Heart right ventricle (tissue), 16 donors: ENCODE measurements at regions of chr10 and their contacts with region 1.

Region 1: GRCh38 chr10:119859420-119860258 is 13.0 kb downstream of the MCMBP start:
- DNase-seq: no peak
- ATAC-seq: no peak
- H3K4me3 ChIP-seq: no peak overlapping the region
- H3K27ac ChIP-seq: no peak overlapping the region
- H3K4me1 ChIP-seq: peaks cover 0 to 14% (median 11%) of the 10 kb centered on the region in 9 donors
- H3K27me3 ChIP-seq: no peaks in the 10 kb centered on the region
- CTCF ChIP-seq: peak; percentile 38 to 75 (median 68)

Region 2: GRCh38 chr10:119588071-119588470 is 271.6 kb before region 1 on chr10:
- intact Hi-C with region 1: no loop called
- DNase-seq: no peak
- ATAC-seq: no peak
- H3K4me3 ChIP-seq: no peak overlapping the region
- H3K27ac ChIP-seq: no peak overlapping the region
- H3K4me1 ChIP-seq: peaks cover 0 to 37% (median 27%) of the 10 kb centered on the region in 9 donors
- H3K27me3 ChIP-seq: no peaks in the 10 kb centered on the region
- CTCF ChIP-seq: no peak

Region 3: GRCh38 chr10:119616882-119617570 is 242.6 kb before region 1 on chr10:
- intact Hi-C with region 1: loop called in 2 of 10 experiments (anchors 10 kb)
- DNase-seq: peak; percentile 21 to 39
- ATAC-seq: peak in 1 of 8 donors; percentile 61
- H3K4me3 ChIP-seq: no peak overlapping the region
- H3K27ac ChIP-seq: no peak overlapping the region
- H3K4me1 ChIP-seq: peaks cover 0 to 37% (median 18%) of the 10 kb centered on the region in 9 donors
- H3K27me3 ChIP-seq: no peaks in the 10 kb centered on the region
- CTCF ChIP-seq: peak in 3 of 9 donors; percentile 25 to 44 (median 26)

Region 4: GRCh38 chr10:119686439-119687191 is 173.0 kb before region 1 on chr10:
- intact Hi-C with region 1: loop called in 9 of 10 experiments (anchors 5 to 10 kb)
- DNase-seq: peak; percentile 78 to 85
- ATAC-seq: peak; percentile 83 to 93 (median 89)
- H3K4me3 ChIP-seq: peak overlapping the region in 7 of 10 donors; percentile 10 to 51 (median 42)
- H3K27ac ChIP-seq: peak overlapping the region in 8 of 10 donors; percentile 3 to 72 (median 49)
- H3K4me1 ChIP-seq: peaks cover 0 to 26% (median 9%) of the 10 kb centered on the region in 9 donors
- H3K27me3 ChIP-seq: no peaks in the 10 kb centered on the region
- CTCF ChIP-seq: peak; percentile 91 to 97 (median 95)

Region 5: DNA sequence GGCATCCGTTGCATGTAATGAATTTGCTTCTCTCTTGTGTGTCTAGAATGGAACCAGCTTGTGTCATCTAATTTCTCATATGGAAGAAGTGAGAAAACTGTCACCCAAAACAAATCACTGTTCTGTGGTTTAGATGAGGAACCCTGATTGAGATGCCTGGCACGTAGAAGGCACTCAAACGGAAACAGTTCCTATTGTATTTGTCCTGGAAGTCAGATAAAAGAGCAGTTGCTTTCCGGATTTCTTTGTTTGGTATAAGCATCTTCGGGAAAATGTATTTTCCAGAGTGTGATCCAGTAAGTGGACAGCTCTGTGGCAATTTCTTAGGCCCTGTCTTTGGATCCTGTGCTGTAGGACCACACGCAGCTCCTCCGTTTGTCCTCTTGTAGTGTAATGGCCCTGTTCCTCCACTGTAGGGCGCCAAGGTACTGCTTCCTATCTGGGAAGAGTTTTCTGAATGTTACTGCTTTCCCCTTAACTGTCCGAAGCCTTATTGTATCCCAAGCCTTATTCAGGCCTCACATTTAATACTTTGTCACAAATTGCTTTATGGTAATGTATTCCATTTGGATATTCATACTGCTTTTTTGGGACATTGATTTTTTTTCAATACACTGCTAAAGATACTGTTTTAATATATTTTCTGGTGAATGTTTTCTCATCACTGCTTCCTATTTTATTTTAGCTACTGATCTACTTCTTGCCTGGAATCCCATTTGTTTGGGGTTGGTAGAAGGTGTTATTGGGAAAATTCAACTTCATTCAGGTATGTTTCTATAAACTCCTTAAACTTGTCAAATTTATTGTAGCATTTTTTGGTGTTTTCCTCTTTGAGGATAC is 109.0 kb before region 1 on chr10:
- intact Hi-C with region 1: loop called in 9 of 10 experiments (anchors 1 to 10 kb)
- DNase-seq: peak; percentile 29 to 79
- ATAC-seq: peak; percentile 87 to 97 (median 94)
- H3K4me3 ChIP-seq: no peak overlapping the region
- H3K27ac ChIP-seq: peak overlapping the region in 1 of 10 donors; percentile 28
- H3K4me1 ChIP-seq: peaks cover 0 to 16% (median 7%) of the 10 kb centered on the region in 9 donors
- H3K27me3 ChIP-seq: no peaks in the 10 kb centered on the region
- CTCF ChIP-seq: peak; percentile 67 to 96 (median 93)

Region 6: GRCh38 chr10:119919826-119920225 is 60.2 kb after region 1 on chr10:
- intact Hi-C with region 1: loop called in 1 of 10 experiments (anchors 10 kb)
- DNase-seq: no peak
- ATAC-seq: no peak
- H3K4me3 ChIP-seq: no peak overlapping the region
- H3K27ac ChIP-seq: peak overlapping the region in 1 of 10 donors; percentile 71
- H3K4me1 ChIP-seq: peaks cover 0 to 14% (median 0%) of the 10 kb centered on the region in 9 donors
- H3K27me3 ChIP-seq: no peaks in the 10 kb centered on the region
- CTCF ChIP-seq: no peak